ENCODE measurements at regions of chr16 and their contacts with region 1.

Region 1: GRCh38 chr16:51670527-51670926 is 519.5 kb upstream of the SALL1 start:
- DNase-seq: no peak
- ATAC-seq: no peak
- H3K4me3 ChIP-seq: no peak overlapping the region
- H3K27ac ChIP-seq: no peak overlapping the region
- H3K4me1 ChIP-seq: no peaks in the 10 kb centered on the region
- H3K27me3 ChIP-seq: 0 out of 5 replicates have a peak, but pooled peaks cover 0 to 5% of the 10 kb centered on the region in 2 experiments
- CTCF ChIP-seq: no peak
- EP300 ChIP-seq: no peak
- POLR2A ChIP-seq: no peak
- RAD21 ChIP-seq: no peak

Region 2: DNA sequence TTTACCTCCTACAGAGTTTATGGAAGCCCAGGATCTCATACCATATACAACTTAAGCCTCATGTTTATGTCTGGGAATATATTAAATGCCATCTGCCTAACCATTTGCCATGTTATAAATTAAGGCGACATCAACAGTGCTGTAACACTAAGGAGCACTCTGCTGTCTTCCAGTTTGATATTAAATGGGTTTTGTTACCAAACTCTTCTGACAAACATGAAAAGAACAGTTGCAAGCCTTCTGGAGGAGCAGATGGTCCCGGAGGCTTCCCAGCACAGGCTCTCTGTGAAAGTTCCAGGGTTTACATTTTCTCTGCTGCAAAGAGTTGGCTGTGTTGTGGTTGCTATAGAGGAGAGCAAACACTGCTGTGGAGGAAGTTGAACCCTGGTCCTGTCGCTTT is 25.8 kb after region 1 on chr16:
- CTCF ChIA-PET with region 1: no interaction called
- POLR2A ChIA-PET with region 1: no interaction called
- in situ Hi-C with region 1: no loop called
- intact Hi-C with region 1: no loop called
- DNase-seq: no peak
- ATAC-seq: no peak
- H3K4me3 ChIP-seq: no peak overlapping the region
- H3K27ac ChIP-seq: no peak overlapping the region
- H3K4me1 ChIP-seq: no peaks in the 10 kb centered on the region
- H3K27me3 ChIP-seq: no peaks in the 10 kb centered on the region
- CTCF ChIP-seq: no peak
- EP300 ChIP-seq: no peak
- POLR2A ChIP-seq: no peak
- RAD21 ChIP-seq: no peak

Region 3: DNA sequence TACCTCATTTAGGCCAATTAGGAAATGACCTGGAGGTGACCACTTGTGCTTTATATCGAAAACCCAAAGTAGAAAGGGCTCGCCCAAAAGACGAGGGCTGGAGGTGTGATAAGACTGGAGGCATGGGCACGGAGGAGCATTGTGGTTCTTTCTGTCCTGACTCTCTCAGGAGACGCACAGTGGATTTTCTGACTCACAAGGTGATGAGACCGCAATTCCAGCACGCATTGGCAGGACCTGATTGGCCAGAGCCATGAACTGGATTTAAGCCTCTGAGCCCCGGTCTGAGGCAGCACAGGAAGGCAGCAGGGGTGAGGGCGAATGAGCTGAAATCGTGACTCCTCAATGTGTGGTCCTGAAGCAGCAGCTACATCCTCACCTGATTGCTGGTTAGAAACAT is 39.7 kb after region 1 on chr16:
- CTCF ChIA-PET with region 1: no interaction called
- POLR2A ChIA-PET with region 1: no interaction called
- in situ Hi-C with region 1: no loop called
- intact Hi-C with region 1: loop called (anchors 2 kb)
- DNase-seq: no peak
- ATAC-seq: no peak
- H3K4me3 ChIP-seq: no peak overlapping the region
- H3K27ac ChIP-seq: no peak overlapping the region
- H3K4me1 ChIP-seq: no peaks in the 10 kb centered on the region
- H3K27me3 ChIP-seq: no peaks in the 10 kb centered on the region
- CTCF ChIP-seq: no peak
- EP300 ChIP-seq: no peak
- POLR2A ChIP-seq: no peak
- RAD21 ChIP-seq: no peak

Region 4: GRCh38 chr16:51834133-51834532 is 163.6 kb after region 1 on chr16:
- CTCF ChIA-PET with region 1: no interaction called
- POLR2A ChIA-PET with region 1: no interaction called
- in situ Hi-C with region 1: no loop called
- intact Hi-C with region 1: no loop called
- DNase-seq: no peak
- ATAC-seq: no peak
- H3K4me3 ChIP-seq: no peak overlapping the region
- H3K27ac ChIP-seq: no peak overlapping the region
- H3K4me1 ChIP-seq: no peaks in the 10 kb centered on the region
- H3K27me3 ChIP-seq: no peaks in the 10 kb centered on the region
- CTCF ChIP-seq: no peak
- EP300 ChIP-seq: no peak
- POLR2A ChIP-seq: no peak
- RAD21 ChIP-seq: no peak